PC-9 (cell line): ENCODE measurements at regions of chr19 and their contacts with region 1.

Region 1: GRCh38 chr19:1825909-1826556 is 14.0 kb upstream of the ATP8B3 start:
- DNase-seq: peak in 1 of 2 experiments; percentile 52
- H3K4me3 ChIP-seq: no peak overlapping the region
- H3K27ac ChIP-seq: no peak overlapping the region
- H3K4me1 ChIP-seq: no peaks in the 10 kb centered on the region
- H3K27me3 ChIP-seq: no peaks in the 10 kb centered on the region
- CTCF ChIP-seq: peak; percentile 84

Region 2: GRCh38 chr19:1521636-1522035 is 304.4 kb before region 1 on chr19:
- CTCF ChIA-PET with region 1: interaction called, 21 read pairs
- POLR2A ChIA-PET with region 1: no interaction called
- intact Hi-C with region 1: no loop called
- DNase-seq: no peak
- H3K4me3 ChIP-seq: no peak overlapping the region
- H3K27ac ChIP-seq: no peak overlapping the region
- H3K4me1 ChIP-seq: no peaks in the 10 kb centered on the region
- H3K27me3 ChIP-seq: no peaks in the 10 kb centered on the region
- CTCF ChIP-seq: no peak

Region 3: DNA sequence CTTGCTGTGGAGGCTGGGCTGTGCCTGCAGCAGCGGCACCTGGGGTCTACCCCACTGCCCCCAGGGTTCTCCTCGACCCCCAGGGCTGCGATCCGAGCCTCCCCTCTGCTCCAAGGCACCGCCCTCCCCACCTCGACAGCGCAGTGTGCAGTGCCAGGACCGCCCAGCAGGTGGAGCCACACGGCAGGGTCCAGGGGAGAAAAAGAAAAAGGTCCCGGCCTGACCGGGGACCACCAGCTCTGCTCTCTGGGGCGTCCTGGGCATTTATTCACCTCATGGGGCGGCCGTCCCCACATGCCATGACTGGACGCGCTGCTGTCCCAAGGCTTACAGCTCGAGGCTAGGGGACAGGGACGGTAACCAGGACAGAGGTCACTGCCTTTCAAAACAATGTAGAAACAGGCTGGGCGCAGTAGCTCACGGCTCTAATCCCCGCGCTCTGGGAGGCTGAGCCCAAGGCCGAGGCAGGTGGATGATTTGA is 11.6 kb after region 1 on chr19:
- CTCF ChIA-PET with region 1: interaction called, 19 read pairs
- POLR2A ChIA-PET with region 1: no interaction called
- intact Hi-C with region 1: no loop called
- DNase-seq: peak in 1 of 2 experiments; percentile 24
- H3K4me3 ChIP-seq: no peak overlapping the region
- H3K27ac ChIP-seq: no peak overlapping the region
- H3K4me1 ChIP-seq: no peaks in the 10 kb centered on the region
- H3K27me3 ChIP-seq: no peaks in the 10 kb centered on the region
- CTCF ChIP-seq: peak; percentile 85

Region 4: DNA sequence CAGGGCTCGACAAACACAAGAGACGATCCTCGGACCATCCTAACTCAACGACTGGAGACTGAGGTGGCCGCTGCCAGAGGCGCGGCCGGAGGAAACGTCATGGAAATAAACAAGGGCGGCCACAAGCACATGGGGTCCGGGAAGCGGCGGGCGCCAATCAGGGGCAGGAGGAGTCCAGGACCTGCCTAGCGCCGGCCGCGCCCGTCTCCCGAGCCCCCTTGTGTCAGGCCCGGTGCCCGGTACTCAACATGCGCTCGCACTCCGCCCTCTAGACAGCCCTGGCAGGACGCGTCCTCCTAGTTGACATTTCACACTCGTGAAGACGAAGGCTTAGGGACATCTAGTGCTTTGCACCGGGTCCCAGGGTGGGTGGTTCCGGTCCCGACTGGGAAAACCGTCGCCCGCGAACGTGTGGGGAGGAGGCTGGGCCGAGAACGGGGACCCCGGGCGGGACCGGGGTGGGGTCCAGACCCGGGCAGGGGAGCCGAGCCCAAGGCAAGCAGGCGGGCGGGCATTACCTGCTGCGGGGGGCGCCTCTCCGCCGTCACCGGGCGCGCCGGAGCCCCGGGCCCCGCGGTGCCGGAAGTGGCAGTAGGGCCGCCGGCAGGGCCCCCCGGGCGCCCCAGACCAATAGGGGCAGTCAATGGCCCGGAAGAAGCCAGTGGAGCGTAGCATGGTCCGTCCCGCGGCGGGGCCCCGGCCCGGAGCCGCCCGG is 21.8 kb after region 1 on chr19:
- CTCF ChIA-PET with region 1: interaction called, 16 read pairs
- POLR2A ChIA-PET with region 1: no interaction called
- intact Hi-C with region 1: no loop called
- DNase-seq: peak in 1 of 2 experiments; percentile 25
- H3K4me3 ChIP-seq: peak overlapping the region; percentile 73
- H3K27ac ChIP-seq: peak overlapping the region; percentile 90
- H3K4me1 ChIP-seq: 0 out of 2 replicates have a peak, but pooled peaks cover 11% of the 10 kb centered on the region
- H3K27me3 ChIP-seq: no peaks in the 10 kb centered on the region
- CTCF ChIP-seq: no peak

Region 5: DNA sequence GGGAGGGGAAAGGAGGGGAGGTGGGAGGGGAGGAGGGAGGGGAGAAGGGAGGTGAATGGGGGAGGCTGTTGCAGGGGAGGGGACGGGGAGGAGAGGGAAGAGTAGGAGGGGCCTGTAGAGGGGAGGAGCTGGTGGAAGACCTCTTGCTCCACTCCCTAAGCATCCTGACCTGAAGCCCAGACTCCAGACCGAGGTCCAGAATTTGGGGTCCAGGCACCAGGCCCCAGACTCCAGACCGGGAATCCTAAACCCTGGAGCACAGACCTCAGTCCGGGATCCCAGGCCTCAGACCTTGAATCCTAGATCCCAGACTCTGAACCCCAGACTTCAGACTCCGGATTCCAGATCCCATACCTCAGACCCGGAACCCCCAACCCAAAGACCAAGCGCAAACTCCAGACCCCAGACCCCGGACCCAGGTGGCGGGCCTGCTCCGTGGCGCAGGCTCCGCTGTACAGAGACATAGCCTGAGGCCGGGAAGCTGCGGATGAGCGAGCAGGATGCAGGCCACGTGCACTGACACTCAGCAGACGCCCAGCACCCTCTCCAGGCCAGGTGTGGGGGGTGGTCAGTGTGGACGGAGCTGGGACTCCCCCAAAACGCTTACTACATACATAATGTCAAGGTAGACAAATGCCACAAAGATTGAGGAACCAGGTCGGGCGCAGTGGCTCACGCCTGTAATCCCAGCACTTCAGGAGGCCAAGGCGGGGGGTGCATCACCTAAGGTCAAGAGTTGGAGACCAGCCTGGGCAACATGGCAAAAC is 190.2 kb after region 1 on chr19:
- CTCF ChIA-PET with region 1: no interaction called
- POLR2A ChIA-PET with region 1: no interaction called
- intact Hi-C with region 1: no loop called
- DNase-seq: peak; percentile 44 to 57
- H3K4me3 ChIP-seq: no peak overlapping the region
- H3K27ac ChIP-seq: no peak overlapping the region
- H3K4me1 ChIP-seq: no peaks in the 10 kb centered on the region; the same call in 1 of the 2 replicates
- H3K27me3 ChIP-seq: no peaks in the 10 kb centered on the region
- CTCF ChIP-seq: no peak

Region 6: GRCh38 chr19:2140138-2140569 is 314.1 kb after region 1 on chr19:
- CTCF ChIA-PET with region 1: no interaction called
- POLR2A ChIA-PET with region 1: interaction called, 11 read pairs
- intact Hi-C with region 1: no loop called
- DNase-seq: no peak
- H3K4me3 ChIP-seq: no peak overlapping the region
- H3K27ac ChIP-seq: no peak overlapping the region
- H3K4me1 ChIP-seq: no peaks in the 10 kb centered on the region
- H3K27me3 ChIP-seq: no peaks in the 10 kb centered on the region
- CTCF ChIP-seq: no peak